CD4-positive, alpha-beta T cell (primary cell): ENCODE measurements at regions of chr12 and their contacts with region 1.

Region 1: DNA sequence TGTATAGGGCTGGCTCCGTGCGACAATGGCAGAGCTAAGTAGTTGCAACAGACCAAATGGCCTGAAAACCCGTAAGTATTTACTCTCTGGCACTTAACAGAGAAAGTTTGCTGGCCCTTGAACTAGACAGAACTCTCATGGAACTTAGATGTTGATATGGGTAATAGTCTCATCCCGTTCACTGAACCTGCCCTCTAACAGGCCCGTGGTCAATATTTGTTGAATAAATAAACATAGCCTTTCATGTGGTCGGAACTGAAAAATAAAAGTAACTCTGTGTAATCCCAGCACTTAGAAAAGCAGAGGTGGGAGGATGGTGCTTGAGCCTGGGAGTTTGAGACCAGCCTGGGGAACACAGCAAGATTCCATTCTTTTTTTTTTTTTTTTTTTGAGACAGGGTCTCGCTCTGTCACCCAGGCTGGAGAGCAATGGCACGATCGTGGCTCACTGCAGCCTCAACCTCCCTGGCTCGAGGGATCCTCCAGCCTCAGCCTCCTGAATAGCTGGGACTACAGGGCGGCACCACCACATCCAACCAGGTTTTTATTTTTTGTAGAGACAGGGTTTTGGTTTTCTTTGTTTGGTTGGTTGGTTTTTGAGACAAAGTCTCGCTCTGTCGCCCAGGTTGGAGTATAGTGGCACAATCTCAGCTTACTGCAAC is 29.7 kb downstream of the KDM2B start:
- DNase-seq: no peak
- ATAC-seq: no peak
- H3K4me3 ChIP-seq: no peak overlapping the region
- H3K4me3 Mint-ChIP-seq: no peak overlapping the region
- H3K27ac ChIP-seq: no peak overlapping the region
- H3K27ac Mint-ChIP-seq: no peak overlapping the region
- H3K4me1 ChIP-seq: peaks cover 5% of the 10 kb centered on the region
- H3K4me1 Mint-ChIP-seq: no peaks in the 10 kb centered on the region
- H3K27me3 ChIP-seq: no peaks in the 10 kb centered on the region
- H3K27me3 Mint-ChIP-seq: no peaks in the 10 kb centered on the region
- CTCF ChIP-seq: no peak

Region 2: GRCh38 chr12:121499929-121500793 is 50.9 kb before region 1 on chr12:
- CTCF ChIA-PET with region 1: interaction called, 10 read pairs
- POLR2A ChIA-PET with region 1: no interaction called
- intact Hi-C with region 1: no loop called
- DNase-seq: peak; percentile 44 to 86 (median 72)
- ATAC-seq: peak; percentile 87
- H3K4me3 ChIP-seq: no peak overlapping the region
- H3K4me3 Mint-ChIP-seq: no peak overlapping the region
- H3K27ac ChIP-seq: no peak overlapping the region
- H3K27ac Mint-ChIP-seq: peak overlapping the region; percentile 49
- H3K4me1 ChIP-seq: peaks cover 16% of the 10 kb centered on the region
- H3K4me1 Mint-ChIP-seq: peaks cover 4% of the 10 kb centered on the region
- H3K27me3 ChIP-seq: no peaks in the 10 kb centered on the region
- H3K27me3 Mint-ChIP-seq: no peaks in the 10 kb centered on the region
- CTCF ChIP-seq: peak; percentile 94

Region 3: GRCh38 chr12:121590476-121591143 is 39.5 kb after region 1 on chr12:
- CTCF ChIA-PET with region 1: interaction called, 9 read pairs
- POLR2A ChIA-PET with region 1: interaction called, 10 read pairs
- intact Hi-C with region 1: loop called in 1 of 2 experiments (anchors 5 kb)
- DNase-seq: peak; percentile 50 to 91 (median 61)
- ATAC-seq: peak; percentile 70
- H3K4me3 ChIP-seq: peak overlapping the region; percentile 52
- H3K4me3 Mint-ChIP-seq: peak overlapping the region; percentile 92
- H3K27ac ChIP-seq: peak overlapping the region; percentile 86 to 94
- H3K27ac Mint-ChIP-seq: peak overlapping the region; percentile 99
- H3K4me1 ChIP-seq: peaks cover 45% of the 10 kb centered on the region
- H3K4me1 Mint-ChIP-seq: peaks cover 40% of the 10 kb centered on the region
- H3K27me3 ChIP-seq: no peaks in the 10 kb centered on the region
- H3K27me3 Mint-ChIP-seq: no peaks in the 10 kb centered on the region
- CTCF ChIP-seq: no peak

Region 4: DNA sequence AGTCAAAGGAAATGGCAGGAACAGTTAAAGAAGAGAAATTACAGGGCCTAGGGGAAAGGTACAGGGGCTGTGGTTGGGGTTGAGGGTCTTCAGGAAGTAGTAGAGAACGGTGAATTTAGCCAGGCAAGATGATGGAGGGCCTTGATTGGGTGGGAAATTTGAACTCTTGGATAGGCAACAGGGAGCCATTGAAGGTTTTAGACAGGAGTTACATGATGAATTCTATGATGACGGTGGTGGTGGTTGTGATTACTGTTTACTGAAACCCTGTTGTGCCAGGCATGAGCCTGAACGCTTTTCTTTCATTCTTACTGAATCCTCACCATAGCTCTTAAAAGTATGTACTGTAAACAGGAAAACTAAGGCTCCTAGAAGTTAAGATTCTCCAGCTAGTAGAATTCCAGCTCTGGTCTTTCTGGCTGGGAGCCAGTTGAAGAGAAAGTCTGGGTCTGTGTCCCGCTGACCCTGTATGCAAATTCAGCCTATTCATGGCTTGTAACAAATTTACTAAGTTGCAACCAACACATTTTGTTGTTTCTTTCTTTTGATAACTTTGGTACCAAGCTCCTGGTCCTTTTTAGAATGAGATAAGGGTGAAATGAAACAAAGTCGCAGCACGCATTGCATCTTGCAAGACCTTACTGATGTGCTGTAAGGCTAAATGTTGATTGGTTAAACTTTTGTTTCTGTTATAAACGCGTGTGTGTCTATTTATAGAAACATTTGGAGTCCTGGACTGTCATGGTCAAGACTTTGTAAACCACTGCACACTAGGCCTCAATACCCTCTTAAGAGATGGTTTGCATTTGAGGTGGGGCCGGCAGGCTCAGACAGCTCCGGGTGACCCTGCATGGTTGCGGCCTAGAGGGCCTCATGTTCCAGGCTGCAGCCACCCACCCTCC is 81.2 kb after region 1 on chr12:
- CTCF ChIA-PET with region 1: interaction called, 62 read pairs
- POLR2A ChIA-PET with region 1: interaction called, 43 read pairs
- intact Hi-C with region 1: no loop called
- DNase-seq: no peak
- ATAC-seq: no peak
- H3K4me3 ChIP-seq: no peak overlapping the region
- H3K4me3 Mint-ChIP-seq: peak overlapping the region; percentile 82
- H3K27ac ChIP-seq: peak overlapping the region; percentile 39 to 45
- H3K27ac Mint-ChIP-seq: peak overlapping the region; percentile 99
- H3K4me1 ChIP-seq: peaks cover 87% of the 10 kb centered on the region
- H3K4me1 Mint-ChIP-seq: peaks cover 81% of the 10 kb centered on the region
- H3K27me3 ChIP-seq: no peaks in the 10 kb centered on the region
- H3K27me3 Mint-ChIP-seq: no peaks in the 10 kb centered on the region
- CTCF ChIP-seq: no peak

Region 5: DNA sequence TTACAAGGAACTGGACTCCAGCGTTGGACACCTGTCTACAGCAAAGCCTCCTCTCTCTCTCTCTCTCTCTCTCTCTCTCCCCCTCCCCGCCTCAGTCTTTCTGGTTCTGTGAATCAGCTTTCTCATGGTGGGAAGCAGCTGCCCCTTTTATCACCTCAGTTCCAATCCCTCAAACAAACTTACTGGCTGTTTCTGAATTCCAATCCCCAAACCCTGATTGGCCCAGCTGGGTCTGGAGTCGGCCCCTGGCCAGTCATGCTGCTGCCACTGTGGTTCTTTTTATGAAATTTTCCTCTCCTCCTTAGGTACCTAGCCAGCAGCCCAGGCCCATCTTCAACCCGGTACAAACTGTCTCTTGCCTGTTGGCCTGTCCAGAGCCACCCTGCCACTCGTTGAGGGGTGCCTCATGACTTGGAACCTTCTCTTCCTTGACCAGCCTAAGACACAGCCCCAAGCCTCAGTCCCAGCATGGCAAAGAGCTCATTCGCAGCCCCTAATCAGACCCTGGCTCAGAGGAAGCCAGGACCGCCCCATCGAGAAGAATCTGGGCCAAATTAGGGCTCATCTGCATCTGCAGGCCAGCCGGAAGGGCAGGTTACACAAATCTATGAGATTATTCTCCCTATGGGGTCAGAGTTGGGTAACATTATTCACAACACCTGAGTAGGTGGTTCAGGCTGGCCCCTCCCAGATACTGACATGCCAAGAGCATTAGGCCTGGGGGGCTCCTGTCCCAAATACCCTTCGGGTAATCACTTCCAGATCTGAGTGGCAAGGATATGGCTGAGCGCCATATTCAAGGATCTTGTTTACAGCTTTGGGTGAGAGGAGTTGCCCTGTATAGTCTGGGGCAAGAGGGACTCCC is 127.8 kb after region 1 on chr12:
- CTCF ChIA-PET with region 1: interaction called, 69 read pairs
- POLR2A ChIA-PET with region 1: interaction called, 5 read pairs
- intact Hi-C with region 1: loop called (anchors 1 kb)
- DNase-seq: no peak
- ATAC-seq: no peak
- H3K4me3 ChIP-seq: no peak overlapping the region
- H3K4me3 Mint-ChIP-seq: peak overlapping the region; percentile 63
- H3K27ac ChIP-seq: no peak overlapping the region
- H3K27ac Mint-ChIP-seq: peak overlapping the region; percentile 83
- H3K4me1 ChIP-seq: peaks cover 11% of the 10 kb centered on the region
- H3K4me1 Mint-ChIP-seq: peaks cover 5% of the 10 kb centered on the region
- H3K27me3 ChIP-seq: no peaks in the 10 kb centered on the region
- H3K27me3 Mint-ChIP-seq: no peaks in the 10 kb centered on the region
- CTCF ChIP-seq: no peak

Region 6: GRCh38 chr12:121773011-121773777 is 222.1 kb after region 1 on chr12:
- CTCF ChIA-PET with region 1: interaction called, 6 read pairs
- POLR2A ChIA-PET with region 1: interaction called, 3 read pairs
- intact Hi-C with region 1: loop called (anchors 1 to 5 kb)
- DNase-seq: peak; percentile 67 to 89 (median 76)
- ATAC-seq: peak; percentile 84
- H3K4me3 ChIP-seq: no peak overlapping the region
- H3K4me3 Mint-ChIP-seq: no peak overlapping the region
- H3K27ac ChIP-seq: no peak overlapping the region
- H3K27ac Mint-ChIP-seq: no peak overlapping the region
- H3K4me1 ChIP-seq: peaks cover 26% of the 10 kb centered on the region
- H3K4me1 Mint-ChIP-seq: peaks cover 13% of the 10 kb centered on the region
- H3K27me3 ChIP-seq: no peaks in the 10 kb centered on the region
- H3K27me3 Mint-ChIP-seq: no peaks in the 10 kb centered on the region
- CTCF ChIP-seq: peak; percentile 91